Activated naive CD4-positive, alpha-beta T cell treated with anti-CD3 and anti-CD28 coated beads for 36 hours (primary cell): ENCODE measurements at regions of chr18 and their contacts with region 1.

Region 1: DNA sequence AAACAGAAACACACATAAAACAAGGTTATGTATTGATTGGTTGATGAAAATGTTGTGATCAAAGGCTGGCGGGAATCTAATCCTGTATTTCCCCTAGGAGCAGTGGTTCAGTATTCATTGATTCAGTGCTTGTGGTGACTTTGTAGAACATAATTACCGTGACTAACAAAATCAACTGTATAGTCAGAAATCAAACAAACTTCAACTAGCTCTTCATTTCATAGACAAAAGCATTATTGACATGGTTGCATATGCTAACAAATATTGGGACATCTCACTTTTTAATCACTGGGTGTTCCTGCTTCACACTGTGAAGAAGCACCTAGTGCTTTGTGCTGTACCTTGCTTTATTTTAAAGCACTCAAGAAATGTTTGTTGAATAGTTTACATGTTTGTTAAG is 41.4 kb downstream of the USP14 start:
- DNase-seq: no peak
- H3K4me3 Mint-ChIP-seq: no peak overlapping the region
- H3K27ac Mint-ChIP-seq: no peak overlapping the region
- H3K4me1 Mint-ChIP-seq: peaks cover 6% of the 10 kb centered on the region
- H3K27me3 Mint-ChIP-seq: no peaks in the 10 kb centered on the region

Region 2: GRCh38 chr18:181711-182110 is 18.1 kb before region 1 on chr18:
- CTCF ChIA-PET with region 1: interaction called, 3 read pairs
- intact Hi-C with region 1: loop called (anchors 1 kb)
- DNase-seq: no peak
- H3K4me3 Mint-ChIP-seq: no peak overlapping the region
- H3K27ac Mint-ChIP-seq: no peak overlapping the region
- H3K4me1 Mint-ChIP-seq: peaks cover 26% of the 10 kb centered on the region
- H3K27me3 Mint-ChIP-seq: no peaks in the 10 kb centered on the region

Region 3: DNA sequence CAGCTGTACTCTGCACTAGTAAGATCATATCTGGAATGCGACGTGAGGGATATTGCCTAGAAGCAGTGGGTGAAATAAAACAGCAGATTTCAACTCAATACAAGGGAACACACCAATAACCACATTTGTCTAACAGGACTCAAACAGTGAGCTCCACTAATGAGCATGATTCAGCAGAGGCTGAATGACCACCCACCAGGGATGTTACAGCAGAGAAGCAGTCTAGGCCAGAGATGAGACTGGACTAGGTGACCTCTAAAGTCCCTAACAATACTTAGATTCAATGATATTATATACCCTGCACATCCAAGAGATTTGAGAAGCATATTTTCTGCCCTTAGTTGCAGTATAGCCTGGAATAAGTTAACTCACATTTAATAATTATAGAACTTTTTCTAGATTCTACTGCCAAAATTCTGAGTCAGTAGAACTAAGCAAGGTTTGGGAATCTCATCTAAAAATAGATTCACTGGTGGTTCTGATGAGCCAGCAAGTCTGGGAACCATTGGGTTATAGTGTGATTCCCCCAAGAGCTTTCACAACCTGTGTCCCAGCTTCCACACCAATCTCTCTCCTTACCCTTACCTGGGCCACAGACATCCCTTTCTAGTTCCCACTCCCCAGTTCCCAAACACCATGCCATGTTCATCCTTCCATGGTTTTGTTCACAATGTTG is 61.8 kb after region 1 on chr18:
- CTCF ChIA-PET with region 1: no interaction called
- intact Hi-C with region 1: no loop called
- DNase-seq: no peak
- H3K4me3 Mint-ChIP-seq: no peak overlapping the region
- H3K27ac Mint-ChIP-seq: no peak overlapping the region
- H3K4me1 Mint-ChIP-seq: peaks cover 29% of the 10 kb centered on the region
- H3K27me3 Mint-ChIP-seq: no peaks in the 10 kb centered on the region